ENCODE measurements at regions of chr2 and their contacts with region 1.

Region 1: DNA sequence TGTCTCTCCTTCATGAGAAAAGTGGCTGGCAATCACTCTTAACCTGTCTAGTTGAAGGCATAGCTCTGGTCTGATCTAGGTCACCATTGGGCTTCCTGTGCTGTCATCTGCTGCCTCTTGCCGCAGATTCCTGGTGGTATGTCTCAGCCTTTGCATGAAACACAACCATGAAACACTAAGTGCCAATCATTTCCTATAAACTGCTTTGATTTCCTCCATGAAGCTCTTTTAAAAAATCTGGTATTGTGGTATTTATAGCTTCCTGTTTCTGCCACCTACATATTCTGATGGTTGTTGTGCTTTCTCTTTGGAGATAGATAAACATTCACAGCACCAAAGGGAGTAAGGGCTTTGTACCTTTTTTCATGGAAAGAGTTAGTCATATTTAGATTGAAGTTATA is 120.0 kb upstream of the EPC2 start:
- DNase-seq: peak; percentile 87
- H3K4me3 Mint-ChIP-seq: peak overlapping the region; percentile 14
- H3K27ac Mint-ChIP-seq: peak overlapping the region; percentile 94
- H3K4me1 Mint-ChIP-seq: peaks cover 85% of the 10 kb centered on the region
- H3K27me3 Mint-ChIP-seq: no peaks in the 10 kb centered on the region

Region 2: GRCh38 chr2:147297820-147298219 is 1226.7 kb before region 1 on chr2:
- CTCF ChIA-PET with region 1: no interaction called
- intact Hi-C with region 1: loop called (anchors 2 kb)
- DNase-seq: peak; percentile 45
- H3K4me3 Mint-ChIP-seq: no peak overlapping the region
- H3K27ac Mint-ChIP-seq: peak overlapping the region; percentile 86
- H3K4me1 Mint-ChIP-seq: peaks cover 58% of the 10 kb centered on the region
- H3K27me3 Mint-ChIP-seq: no peaks in the 10 kb centered on the region

Region 3: GRCh38 chr2:148509288-148509902 is 15.1 kb before region 1 on chr2:
- CTCF ChIA-PET with region 1: interaction called, 22 read pairs
- intact Hi-C with region 1: loop called (anchors 1 kb)
- DNase-seq: peak; percentile 97
- H3K4me3 Mint-ChIP-seq: peak overlapping the region; percentile 60
- H3K27ac Mint-ChIP-seq: peak overlapping the region; percentile 70
- H3K4me1 Mint-ChIP-seq: peaks cover 29% of the 10 kb centered on the region
- H3K27me3 Mint-ChIP-seq: no peaks in the 10 kb centered on the region

Region 4: GRCh38 chr2:148603562-148603920 is 79.0 kb after region 1 on chr2:
- CTCF ChIA-PET with region 1: no interaction called
- intact Hi-C with region 1: loop called (anchors 1 kb)
- DNase-seq: peak; percentile 56
- H3K4me3 Mint-ChIP-seq: no peak overlapping the region
- H3K27ac Mint-ChIP-seq: peak overlapping the region; percentile 82
- H3K4me1 Mint-ChIP-seq: peaks cover 16% of the 10 kb centered on the region
- H3K27me3 Mint-ChIP-seq: no peaks in the 10 kb centered on the region

Region 5: DNA sequence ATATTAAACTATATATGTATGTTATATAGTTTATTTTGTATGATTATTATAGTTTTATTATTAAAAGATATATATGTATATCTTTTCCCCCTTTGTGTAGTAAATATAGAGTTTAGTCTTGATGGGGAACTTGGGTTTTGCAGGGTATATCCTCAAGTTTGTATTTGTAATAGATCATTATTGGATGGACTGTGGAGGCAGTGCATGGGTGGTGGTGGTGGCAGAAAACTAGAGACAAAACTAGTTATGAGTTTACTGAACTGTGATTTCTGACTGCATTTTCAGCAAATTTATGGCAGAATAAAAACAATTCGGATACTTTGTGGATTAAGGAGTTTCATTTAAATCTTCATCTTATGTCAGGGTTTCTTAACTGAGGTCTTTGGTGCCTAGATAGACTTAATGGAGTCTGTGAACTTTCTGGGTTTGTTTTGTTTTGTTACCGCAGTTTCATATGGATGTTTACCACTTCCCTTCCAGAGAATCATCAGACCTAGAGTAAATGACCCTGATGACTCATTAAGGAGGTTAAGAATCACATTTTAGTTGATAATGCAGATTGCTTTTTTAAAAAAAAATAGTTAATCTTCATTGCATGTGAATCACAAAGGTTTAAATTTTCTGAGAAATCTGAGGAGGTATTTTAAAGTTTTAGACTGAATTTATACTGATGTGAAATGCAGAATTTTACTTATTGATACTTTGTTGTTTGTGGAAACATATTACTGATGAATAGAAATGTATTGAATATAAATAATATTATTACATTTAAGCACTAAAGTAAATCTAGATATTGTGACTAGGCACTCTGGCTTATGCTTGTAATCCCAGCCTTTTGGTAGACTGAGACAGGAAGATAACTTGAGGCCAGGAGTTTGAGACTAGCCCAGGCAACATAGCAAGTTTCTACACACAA is 134.5 kb after region 1 on chr2:
- CTCF ChIA-PET with region 1: no interaction called
- intact Hi-C with region 1: no loop called
- DNase-seq: no peak
- H3K4me3 Mint-ChIP-seq: no peak overlapping the region
- H3K27ac Mint-ChIP-seq: peak overlapping the region; percentile 8
- H3K4me1 Mint-ChIP-seq: peaks cover 70% of the 10 kb centered on the region
- H3K27me3 Mint-ChIP-seq: no peaks in the 10 kb centered on the region

Region 6: DNA sequence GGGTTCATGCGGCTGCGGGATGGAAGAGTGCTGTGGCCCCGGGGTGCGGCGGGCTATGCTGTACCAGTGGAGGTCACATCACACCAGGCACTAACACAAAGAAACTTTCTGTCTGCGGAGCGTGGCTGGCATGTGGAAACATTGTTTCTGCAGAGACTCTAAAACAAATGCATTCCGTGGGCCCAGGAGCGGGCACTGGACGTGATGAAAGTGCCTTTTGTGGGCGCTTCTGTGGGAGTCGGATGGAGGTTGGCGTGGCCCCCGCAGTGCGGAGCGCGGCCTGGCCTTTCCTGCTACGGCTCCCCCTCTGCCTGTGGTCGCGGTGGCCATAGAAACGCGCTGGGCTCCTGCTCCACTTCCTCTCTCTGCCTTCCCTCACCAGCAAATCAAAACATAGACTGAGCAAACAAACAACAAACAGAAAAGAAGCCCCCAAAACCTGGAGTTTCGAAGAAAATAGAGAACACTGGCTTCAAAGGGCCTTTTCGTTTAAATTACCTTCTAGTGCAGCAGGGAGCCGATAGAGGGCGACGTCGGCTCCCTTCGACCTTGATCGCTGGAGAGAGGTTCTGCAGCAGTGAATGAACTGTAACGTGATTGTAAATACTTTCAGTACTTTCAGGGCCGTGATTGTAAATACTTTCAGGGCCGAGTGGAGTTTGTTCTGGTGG is 401.9 kb after region 1 on chr2:
- CTCF ChIA-PET with region 1: no interaction called
- intact Hi-C with region 1: loop called (anchors 1 kb)
- DNase-seq: peak; percentile 67
- H3K4me3 Mint-ChIP-seq: peak overlapping the region; percentile 76
- H3K27ac Mint-ChIP-seq: peak overlapping the region; percentile 37
- H3K4me1 Mint-ChIP-seq: peaks cover 14% of the 10 kb centered on the region
- H3K27me3 Mint-ChIP-seq: no peaks in the 10 kb centered on the region

Region 7: DNA sequence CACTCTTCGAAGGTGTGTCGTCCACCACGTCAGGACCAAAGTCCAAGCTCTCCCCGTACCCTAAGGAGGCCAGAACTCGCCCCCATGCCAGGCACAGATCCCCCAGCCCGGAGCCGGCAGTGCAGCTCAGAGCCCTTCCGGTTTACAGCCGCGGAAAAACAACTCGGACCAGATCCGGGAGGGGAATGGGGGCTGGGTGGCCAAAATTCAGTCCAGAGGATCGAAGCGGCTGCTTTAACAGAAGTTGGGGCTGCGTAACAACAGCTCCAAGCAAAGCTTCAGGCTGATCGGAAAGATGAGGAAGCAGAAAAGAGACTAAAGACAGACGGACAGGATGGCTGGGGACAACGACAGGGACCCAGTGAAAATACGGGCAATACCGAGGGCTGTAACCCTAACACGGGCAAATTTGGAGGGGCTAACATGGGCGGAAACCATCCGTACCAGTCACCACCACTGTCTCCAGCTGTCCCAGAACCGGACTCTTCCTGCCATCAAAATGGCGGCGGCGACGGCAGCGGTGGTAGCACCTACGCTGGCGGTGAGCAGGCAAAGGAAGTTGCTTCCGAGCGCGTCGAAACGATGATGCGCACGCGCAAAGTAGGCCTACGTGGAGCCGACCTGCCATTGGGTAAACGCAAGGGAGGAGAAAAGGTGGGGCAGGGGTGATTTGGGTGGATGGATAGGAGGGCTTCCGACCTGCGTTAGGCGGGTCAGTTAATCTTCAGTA is 1062.9 kb after region 1 on chr2 and contains the start of gene MMADHC:
- CTCF ChIA-PET with region 1: no interaction called
- intact Hi-C with region 1: loop called (anchors 10 kb)
- DNase-seq: peak; percentile 96
- H3K4me3 Mint-ChIP-seq: peak within 1 kb of the TSS; percentile 96
- H3K27ac Mint-ChIP-seq: peak within 1 kb of the TSS; percentile 98
- H3K4me1 Mint-ChIP-seq: peaks cover 30% of the 10 kb centered on the region
- H3K27me3 Mint-ChIP-seq: peaks cover 11% of the 10 kb centered on the region
- total RNA-seq, gene MMADHC: 142 to 143 TPM